ENCODE measurements at regions of chr10 and their contacts with region 1.

Region 1: DNA sequence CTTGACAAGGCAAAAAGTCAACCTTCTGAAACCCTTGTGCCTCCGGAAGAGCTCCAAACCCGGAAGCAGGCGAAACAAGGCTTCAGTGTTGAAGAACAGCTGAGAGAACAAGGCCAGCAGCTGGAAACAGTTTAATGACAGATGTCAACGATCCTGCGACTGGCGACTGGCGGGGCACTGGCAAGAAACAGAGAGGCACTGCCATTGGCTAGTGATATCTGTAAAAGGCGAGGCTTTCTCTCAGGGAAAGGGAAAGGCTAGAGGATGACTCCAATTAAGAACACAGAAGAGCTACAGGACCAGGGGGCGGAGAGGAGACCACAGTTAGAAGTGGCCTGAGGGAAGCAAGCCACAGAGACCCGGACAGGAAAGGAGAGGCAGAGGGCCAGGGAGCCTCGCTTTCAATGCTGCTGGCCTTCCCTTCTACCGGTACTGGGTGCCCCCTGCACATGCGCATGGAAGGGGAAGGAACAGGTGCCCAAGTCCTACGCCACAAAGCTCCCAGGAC is 19.4 kb downstream of the ITGB1 start:
- DNase-seq: no peak
- ATAC-seq: peak; percentile 10
- H3K4me3 ChIP-seq: no peak overlapping the region
- H3K4me3 Mint-ChIP-seq: peak overlapping the region in 6 of 10 donors; percentile 14 to 33 (median 20)
- H3K27ac ChIP-seq: no peak overlapping the region
- H3K27ac Mint-ChIP-seq: peak overlapping the region in 4 of 9 donors; percentile 18 to 60 (median 44)
- H3K4me1 ChIP-seq: peaks cover 0 to 23% of the 10 kb centered on the region in 2 donors
- H3K4me1 Mint-ChIP-seq: peaks cover 6 to 48% (median 38%) of the 10 kb centered on the region in 7 donors
- H3K27me3 ChIP-seq: no peaks in the 10 kb centered on the region
- H3K27me3 Mint-ChIP-seq: no peaks in the 10 kb centered on the region

Region 2: DNA sequence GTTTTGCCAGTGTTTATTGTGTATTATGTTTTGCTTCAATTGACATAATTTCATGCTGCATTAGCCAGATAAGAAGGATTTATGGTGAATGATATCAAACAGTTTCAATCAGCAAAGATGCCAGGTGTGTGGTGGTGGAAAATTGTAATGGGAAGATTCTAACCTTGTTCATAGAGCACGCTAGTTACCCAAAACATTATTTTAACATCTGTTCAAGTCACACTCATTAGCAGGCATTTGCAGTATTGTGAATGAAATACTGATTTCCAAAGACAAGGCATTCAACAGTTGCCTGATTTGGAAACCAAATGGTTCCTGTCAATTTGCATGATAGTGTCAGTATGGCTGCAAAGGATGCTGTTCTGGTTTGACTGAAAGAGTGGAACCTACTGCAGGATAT is 721.4 kb before region 1 on chr10:
- CTCF ChIA-PET with region 1: no interaction called
- POLR2A ChIA-PET with region 1: no interaction called
- intact Hi-C with region 1: no loop called
- DNase-seq: no peak
- ATAC-seq: no peak
- H3K4me3 ChIP-seq: no peak overlapping the region
- H3K4me3 Mint-ChIP-seq: no peak overlapping the region
- H3K27ac ChIP-seq: no peak overlapping the region
- H3K27ac Mint-ChIP-seq: no peak overlapping the region
- H3K4me1 ChIP-seq: no peaks in the 10 kb centered on the region
- H3K4me1 Mint-ChIP-seq: no peaks in the 10 kb centered on the region
- H3K27me3 ChIP-seq: no peaks in the 10 kb centered on the region
- H3K27me3 Mint-ChIP-seq: peaks cover 3 to 15% (median 11%) of the 10 kb centered on the region in 5 donors

Region 3: DNA sequence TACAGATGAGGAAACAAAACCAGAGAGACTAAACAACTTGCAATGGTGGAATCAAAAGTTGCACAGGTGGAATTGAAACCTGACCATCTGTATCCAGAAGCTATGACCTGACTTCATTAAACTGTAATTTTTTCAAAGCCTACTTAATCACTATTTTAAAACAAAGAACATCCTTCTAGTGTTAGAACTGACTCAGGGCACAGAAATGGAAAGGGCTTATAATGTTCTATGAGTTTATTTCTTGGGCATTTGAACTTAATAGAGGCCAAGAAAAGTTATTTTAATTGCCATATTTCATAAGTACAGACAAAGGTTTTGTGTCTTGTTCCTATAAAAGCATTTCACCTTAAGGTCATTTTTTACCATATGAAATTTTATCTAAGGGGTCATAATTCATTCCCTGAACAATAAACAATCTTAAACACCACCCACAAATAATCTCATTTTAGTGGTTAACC is 10.6 kb after region 1 on chr10:
- CTCF ChIA-PET with region 1: no interaction called
- POLR2A ChIA-PET with region 1: no interaction called
- intact Hi-C with region 1: loop called in 1 of 2 experiments (anchors 2 kb)
- DNase-seq: no peak
- ATAC-seq: no peak
- H3K4me3 ChIP-seq: no peak overlapping the region
- H3K4me3 Mint-ChIP-seq: no peak overlapping the region
- H3K27ac ChIP-seq: no peak overlapping the region
- H3K27ac Mint-ChIP-seq: no peak overlapping the region
- H3K4me1 ChIP-seq: peaks cover 8 to 53% of the 10 kb centered on the region in 2 donors
- H3K4me1 Mint-ChIP-seq: peaks cover 29 to 79% (median 63%) of the 10 kb centered on the region in 7 donors
- H3K27me3 ChIP-seq: no peaks in the 10 kb centered on the region
- H3K27me3 Mint-ChIP-seq: no peaks in the 10 kb centered on the region

Region 4: GRCh38 chr10:33087152-33087551 is 148.5 kb after region 1 on chr10:
- CTCF ChIA-PET with region 1: no interaction called
- POLR2A ChIA-PET with region 1: no interaction called
- intact Hi-C with region 1: no loop called
- DNase-seq: peak in 1 of 9 donors; percentile 9
- ATAC-seq: peak; percentile 22
- H3K4me3 ChIP-seq: no peak overlapping the region
- H3K4me3 Mint-ChIP-seq: peak overlapping the region in 7 of 10 donors; percentile 6 to 54 (median 34)
- H3K27ac ChIP-seq: no peak overlapping the region
- H3K27ac Mint-ChIP-seq: peak overlapping the region in 3 of 9 donors; percentile 15 to 30 (median 26)
- H3K4me1 ChIP-seq: peaks cover 8 to 17% of the 10 kb centered on the region in 2 donors
- H3K4me1 Mint-ChIP-seq: peaks cover 6 to 31% (median 14%) of the 10 kb centered on the region in 7 donors
- H3K27me3 ChIP-seq: no peaks in the 10 kb centered on the region
- H3K27me3 Mint-ChIP-seq: no peaks in the 10 kb centered on the region

Measured in naive thymus-derived CD4-positive, alpha-beta T cell (primary cell).